PC-3 (cell line): ENCODE measurements at regions of chr6 and their contacts with region 1.

Region 1: GRCh38 chr6:106339334-106340029 is 13.9 kb upstream of the ATG5 start:
- DNase-seq: peak; percentile 82
- ATAC-seq: peak; percentile 91
- H3K4me3 ChIP-seq: peak overlapping the region; percentile 56
- H3K27ac ChIP-seq: peak overlapping the region; percentile 70
- H3K4me1 ChIP-seq: peaks cover 12% of the 10 kb centered on the region
- H3K27me3 ChIP-seq: no peaks in the 10 kb centered on the region
- CTCF ChIP-seq: peak; percentile 83

Region 2: GRCh38 chr6:106360410-106360988 is 21.0 kb after region 1 on chr6 and contains the start of gene CRYBG1:
- CTCF ChIA-PET with region 1: no interaction called
- POLR2A ChIA-PET with region 1: no interaction called
- intact Hi-C with region 1: loop called (anchors 1 kb)
- DNase-seq: peak; percentile 90
- ATAC-seq: peak; percentile 85
- H3K4me3 ChIP-seq: peak within 1 kb of the TSS; percentile 70
- H3K27ac ChIP-seq: peak within 1 kb of the TSS; percentile 42
- H3K4me1 ChIP-seq: peaks cover 20% of the 10 kb centered on the region
- H3K27me3 ChIP-seq: no peaks in the 10 kb centered on the region
- CTCF ChIP-seq: peak; percentile 82
- total RNA-seq, gene CRYBG1: 19.9 and 22.2 TPM in 2 replicates

Region 3: GRCh38 chr6:106377061-106377540 is 37.6 kb after region 1 on chr6:
- CTCF ChIA-PET with region 1: interaction called, 4 read pairs
- POLR2A ChIA-PET with region 1: no interaction called
- intact Hi-C with region 1: loop called (anchors 2 kb)
- DNase-seq: peak; percentile 75
- ATAC-seq: peak; percentile 40
- H3K4me3 ChIP-seq: peak overlapping the region; percentile 38
- H3K27ac ChIP-seq: peak overlapping the region; percentile 64
- H3K4me1 ChIP-seq: peaks cover 52% of the 10 kb centered on the region
- H3K27me3 ChIP-seq: no peaks in the 10 kb centered on the region
- CTCF ChIP-seq: no peak

Region 4: GRCh38 chr6:106444777-106445507 is 105.5 kb after region 1 on chr6:
- CTCF ChIA-PET with region 1: interaction called, 10 read pairs
- POLR2A ChIA-PET with region 1: no interaction called
- intact Hi-C with region 1: loop called (anchors 1 kb)
- DNase-seq: peak; percentile 70
- ATAC-seq: no peak
- H3K4me3 ChIP-seq: no peak overlapping the region
- H3K27ac ChIP-seq: no peak overlapping the region
- H3K4me1 ChIP-seq: peaks cover 32% of the 10 kb centered on the region
- H3K27me3 ChIP-seq: no peaks in the 10 kb centered on the region
- CTCF ChIP-seq: peak; percentile 71

Region 5: DNA sequence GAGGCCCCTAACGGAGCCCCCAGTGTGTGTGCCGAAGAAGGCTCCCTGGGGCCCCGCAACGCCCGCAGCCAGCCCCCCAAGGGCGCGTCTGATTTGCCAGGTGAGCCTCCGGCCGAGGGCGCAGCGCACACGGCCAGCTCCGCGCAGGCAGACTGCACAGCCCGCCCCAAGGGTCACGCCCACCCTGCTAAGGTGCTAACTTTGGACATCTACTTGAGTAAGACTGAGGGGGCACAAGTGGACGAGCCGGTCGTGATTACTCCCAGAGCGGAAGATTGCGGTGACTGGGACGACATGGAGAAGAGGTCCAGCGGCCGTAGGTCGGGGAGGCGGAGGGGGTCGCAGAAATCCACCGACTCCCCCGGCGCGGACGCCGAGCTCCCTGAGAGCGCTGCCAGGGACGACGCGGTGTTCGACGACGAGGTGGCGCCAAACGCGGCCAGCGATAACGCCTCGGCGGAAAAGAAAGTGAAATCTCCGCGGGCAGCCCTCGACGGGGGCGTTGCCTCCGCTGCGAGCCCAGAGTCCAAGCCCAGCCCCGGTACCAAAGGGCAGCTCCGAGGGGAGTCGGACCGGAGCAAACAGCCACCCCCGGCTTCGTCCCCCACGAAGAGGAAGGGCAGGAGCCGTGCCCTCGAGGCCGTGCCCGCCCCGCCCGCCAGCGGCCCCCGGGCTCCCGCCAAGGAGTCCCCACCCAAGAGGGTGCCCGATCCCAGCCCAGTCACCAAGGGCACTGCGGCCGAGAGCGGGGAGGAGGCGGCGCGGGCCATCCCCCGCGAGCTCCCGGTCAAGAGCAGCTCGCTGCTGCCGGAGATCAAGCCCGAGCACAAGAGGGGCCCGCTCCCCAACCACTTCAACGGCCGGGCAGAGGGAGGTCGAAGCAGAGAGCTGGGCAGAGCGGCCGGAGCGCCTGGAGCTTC is 172.8 kb after region 1 on chr6:
- CTCF ChIA-PET with region 1: no interaction called
- POLR2A ChIA-PET with region 1: no interaction called
- intact Hi-C with region 1: loop called (anchors 5 kb)
- DNase-seq: peak; percentile 58
- ATAC-seq: peak; percentile 33
- H3K4me3 ChIP-seq: peak overlapping the region; percentile 87
- H3K27ac ChIP-seq: peak overlapping the region; percentile 84
- H3K4me1 ChIP-seq: peaks cover 35% of the 10 kb centered on the region
- H3K27me3 ChIP-seq: no peaks in the 10 kb centered on the region
- CTCF ChIP-seq: peak; percentile 22; the same call in 1 of the 2 replicates

Region 6: DNA sequence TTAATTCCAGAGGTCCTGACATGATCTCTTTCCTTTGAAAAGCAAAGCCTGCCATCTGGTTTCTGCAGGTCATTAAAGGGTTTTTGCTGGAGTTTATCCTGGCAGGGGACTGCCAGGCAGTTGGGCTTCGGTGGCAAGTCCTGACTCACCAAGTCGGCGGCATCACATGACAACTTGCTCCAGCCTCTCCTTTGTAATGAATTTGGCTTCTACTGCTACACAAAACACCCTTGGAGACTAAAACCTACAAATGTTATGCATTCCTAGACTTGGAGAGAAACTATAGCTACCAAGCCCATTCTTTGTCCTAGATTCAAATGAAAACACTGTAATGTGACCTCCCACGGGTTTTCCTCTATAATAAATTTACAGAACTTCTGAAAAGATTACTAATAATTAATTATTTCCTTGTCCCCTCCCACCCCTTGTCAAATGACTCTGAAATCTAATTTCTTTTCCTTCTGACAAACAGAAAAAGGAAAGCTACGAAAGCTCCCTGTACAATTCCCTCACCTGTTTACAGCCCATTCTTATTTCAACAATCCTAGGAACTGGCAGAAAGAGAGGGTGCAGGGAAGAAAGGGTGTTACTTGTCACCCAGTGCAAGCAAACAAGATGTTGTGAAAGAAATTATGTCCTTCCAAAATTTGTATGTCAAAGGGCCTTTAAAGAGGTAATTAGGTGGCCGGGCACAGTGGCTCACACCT is 352.8 kb after region 1 on chr6:
- CTCF ChIA-PET with region 1: no interaction called
- POLR2A ChIA-PET with region 1: no interaction called
- intact Hi-C with region 1: loop called (anchors 5 kb)
- DNase-seq: peak; percentile 53
- ATAC-seq: peak; percentile 86
- H3K4me3 ChIP-seq: no peak overlapping the region
- H3K27ac ChIP-seq: no peak overlapping the region
- H3K4me1 ChIP-seq: peaks cover 25% of the 10 kb centered on the region
- H3K27me3 ChIP-seq: no peaks in the 10 kb centered on the region
- CTCF ChIP-seq: no peak

Region 7: GRCh38 chr6:107114213-107114905 is 774.9 kb after region 1 on chr6:
- CTCF ChIA-PET with region 1: no interaction called
- POLR2A ChIA-PET with region 1: no interaction called
- intact Hi-C with region 1: loop called (anchors 10 kb)
- DNase-seq: peak; percentile 81
- ATAC-seq: peak; percentile 68
- H3K4me3 ChIP-seq: peak overlapping the region; percentile 76
- H3K27ac ChIP-seq: no peak overlapping the region
- H3K4me1 ChIP-seq: peaks cover 7% of the 10 kb centered on the region
- H3K27me3 ChIP-seq: no peaks in the 10 kb centered on the region
- CTCF ChIP-seq: peak; percentile 57